SK-N-SH (cell line): ENCODE measurements at regions of chr1 and their contacts with region 1.

Region 1: GRCh38 chr1:231211005-231211857 is 29.8 kb upstream of the GNPAT start:
- DNase-seq: peak; percentile 86
- H3K4me3 ChIP-seq: peak overlapping the region; percentile 51 to 90
- H3K27ac ChIP-seq: no peak overlapping the region
- H3K4me1 ChIP-seq: peaks cover 0 to 4% of the 10 kb centered on the region in 2 experiments; a peak in 1 of 4 replicates
- H3K27me3 ChIP-seq: peaks cover 5% of the 10 kb centered on the region; the same call in 1 of the 2 replicates
- CTCF ChIP-seq: peak; percentile 91
- EP300 ChIP-seq: no peak
- RAD21 ChIP-seq: peak; percentile 95

Region 2: GRCh38 chr1:230797942-230798418 is 413.3 kb before region 1 on chr1:
- CTCF ChIA-PET with region 1: interaction called, 29 read pairs
- POLR2A ChIA-PET with region 1: no interaction called
- DNase-seq: peak; percentile 55
- H3K4me3 ChIP-seq: no peak overlapping the region; a peak in 1 of 4 replicates
- H3K27ac ChIP-seq: no peak overlapping the region
- H3K4me1 ChIP-seq: no peaks in the 10 kb centered on the region
- H3K27me3 ChIP-seq: no peaks in the 10 kb centered on the region
- CTCF ChIP-seq: peak; percentile 74
- EP300 ChIP-seq: no peak
- RAD21 ChIP-seq: peak; percentile 82

Region 3: DNA sequence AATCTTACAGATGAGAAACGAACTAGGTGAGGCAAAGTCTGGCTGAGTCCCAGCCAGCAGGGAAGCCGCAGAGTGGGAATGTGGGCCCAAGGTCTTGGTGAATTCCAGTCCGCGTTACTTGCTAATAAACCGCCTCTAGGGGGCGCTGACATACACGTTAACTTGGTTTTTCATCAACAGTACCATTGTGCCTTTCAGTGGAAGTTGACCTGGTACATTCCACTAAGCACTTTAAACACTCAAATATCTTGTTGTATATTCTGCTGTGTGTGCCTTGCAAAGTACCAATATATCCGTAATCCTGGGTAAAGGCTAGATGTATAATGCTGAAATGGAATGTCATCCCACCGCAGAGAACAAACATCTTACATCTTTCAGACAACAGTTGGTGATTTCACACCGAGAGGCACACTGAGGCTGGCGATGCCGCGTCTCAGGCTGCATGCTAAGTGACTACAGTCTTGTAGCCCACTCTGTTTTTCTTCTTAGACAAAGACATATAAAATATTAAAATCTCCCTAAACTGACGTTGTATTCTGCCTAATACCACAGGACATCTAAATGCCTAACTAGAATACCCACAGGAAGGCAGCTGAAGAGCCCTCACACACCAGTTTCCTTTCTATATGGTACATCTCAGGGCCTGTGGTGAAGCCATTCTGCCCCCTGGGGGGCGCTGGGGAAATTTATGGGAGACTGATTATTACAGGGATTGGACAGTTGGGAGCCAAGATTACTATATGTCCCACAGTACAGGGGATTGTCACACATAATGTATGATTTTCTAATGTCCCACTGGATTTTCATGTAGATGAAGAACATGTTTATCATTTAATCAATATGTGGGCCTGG is 293.7 kb before region 1 on chr1:
- CTCF ChIA-PET with region 1: interaction called, 31 read pairs
- POLR2A ChIA-PET with region 1: no interaction called
- DNase-seq: peak; percentile 66
- H3K4me3 ChIP-seq: no peak overlapping the region; a peak in 1 of 4 replicates
- H3K27ac ChIP-seq: no peak overlapping the region
- H3K4me1 ChIP-seq: no peaks in the 10 kb centered on the region
- H3K27me3 ChIP-seq: no peaks in the 10 kb centered on the region
- CTCF ChIP-seq: peak; percentile 68
- EP300 ChIP-seq: no peak
- RAD21 ChIP-seq: peak; percentile 72

Region 4: DNA sequence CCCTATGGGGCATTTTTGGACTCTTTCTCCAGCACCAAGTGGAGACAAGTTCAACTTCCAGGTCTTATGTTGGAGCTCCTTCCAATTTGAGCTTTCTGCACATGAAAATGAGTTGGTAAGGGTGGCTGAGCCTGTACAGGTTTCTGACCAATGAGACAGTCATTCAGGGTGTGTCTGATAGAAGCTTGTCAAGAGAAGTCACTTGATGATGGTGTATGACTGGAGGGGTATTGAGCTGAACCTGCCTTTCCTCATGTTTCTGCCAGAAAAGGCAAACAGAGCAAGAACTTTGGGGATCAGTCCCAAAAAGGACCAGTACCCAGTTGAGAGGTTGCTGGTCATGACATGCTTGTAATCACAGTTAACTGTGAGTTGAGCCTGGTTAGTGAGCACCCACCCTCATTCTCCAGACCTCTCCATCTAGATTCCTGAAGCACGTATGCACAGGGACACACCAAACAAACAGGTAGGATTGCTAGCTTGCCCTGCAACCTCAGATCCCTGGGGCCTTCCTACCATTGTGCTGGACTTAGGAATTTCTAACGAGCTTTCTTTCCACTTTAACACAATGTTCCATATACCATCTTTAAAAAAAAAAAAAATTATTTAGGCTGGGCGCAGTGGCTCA is 197.7 kb before region 1 on chr1:
- CTCF ChIA-PET with region 1: interaction called, 11 read pairs
- POLR2A ChIA-PET with region 1: no interaction called
- DNase-seq: no peak
- H3K4me3 ChIP-seq: no peak overlapping the region
- H3K27ac ChIP-seq: no peak overlapping the region
- H3K4me1 ChIP-seq: no peaks in the 10 kb centered on the region
- H3K27me3 ChIP-seq: no peaks in the 10 kb centered on the region
- CTCF ChIP-seq: no peak
- EP300 ChIP-seq: no peak
- RAD21 ChIP-seq: no peak

Region 5: GRCh38 chr1:231153726-231154125 is 57.5 kb before region 1 on chr1:
- CTCF ChIA-PET with region 1: no interaction called
- POLR2A ChIA-PET with region 1: no interaction called
- DNase-seq: no peak
- H3K4me3 ChIP-seq: no peak overlapping the region
- H3K27ac ChIP-seq: no peak overlapping the region
- H3K4me1 ChIP-seq: no peaks in the 10 kb centered on the region
- H3K27me3 ChIP-seq: no peaks in the 10 kb centered on the region
- CTCF ChIP-seq: no peak
- EP300 ChIP-seq: no peak
- RAD21 ChIP-seq: no peak

Region 6: GRCh38 chr1:231192620-231193163 is 18.5 kb before region 1 on chr1:
- CTCF ChIA-PET with region 1: interaction called, 19 read pairs
- POLR2A ChIA-PET with region 1: no interaction called
- DNase-seq: peak; percentile 46
- H3K4me3 ChIP-seq: no peak overlapping the region
- H3K27ac ChIP-seq: no peak overlapping the region
- H3K4me1 ChIP-seq: peaks cover 0 to 6% of the 10 kb centered on the region in 2 experiments; a peak in 1 of 4 replicates
- H3K27me3 ChIP-seq: no peaks in the 10 kb centered on the region
- CTCF ChIP-seq: no peak
- EP300 ChIP-seq: no peak
- RAD21 ChIP-seq: no peak

Region 7: DNA sequence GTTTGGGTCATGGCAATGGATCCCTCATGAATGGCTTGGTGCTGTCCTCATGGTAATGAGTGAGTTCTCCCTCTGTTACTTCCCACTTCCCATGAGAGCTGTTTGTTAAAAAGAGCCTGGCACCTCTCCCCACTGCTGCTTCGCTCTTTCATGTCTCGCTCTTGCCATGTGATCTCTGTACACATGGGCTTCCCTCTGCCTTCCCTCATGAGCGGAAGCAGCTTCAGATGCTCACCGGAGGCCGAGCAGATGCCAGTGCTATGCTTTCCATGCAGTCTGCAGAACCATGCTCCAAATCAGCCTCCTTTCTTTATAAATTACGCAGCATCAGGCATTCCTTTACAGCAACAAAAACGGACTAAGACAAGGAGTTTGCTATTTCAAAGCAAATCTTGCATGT is 14.9 kb after region 1 on chr1:
- CTCF ChIA-PET with region 1: interaction called, 15 read pairs
- POLR2A ChIA-PET with region 1: no interaction called
- DNase-seq: no peak
- H3K4me3 ChIP-seq: no peak overlapping the region
- H3K27ac ChIP-seq: no peak overlapping the region
- H3K4me1 ChIP-seq: no peaks in the 10 kb centered on the region
- H3K27me3 ChIP-seq: no peaks in the 10 kb centered on the region
- CTCF ChIP-seq: no peak
- EP300 ChIP-seq: no peak
- RAD21 ChIP-seq: no peak